Activated B cell treated with CpG ODN at 0.5 μM for 24 hours (primary cell): ENCODE measurements at regions of chr7 and their contacts with region 1.

Region 1: GRCh38 chr7:15963206-15963605 is 276.7 kb upstream of the MEOX2 start:
- DNase-seq: no peak
- ATAC-seq: no peak
- H3K4me3 Mint-ChIP-seq: no peak overlapping the region
- H3K27ac Mint-ChIP-seq: no peak overlapping the region
- H3K4me1 Mint-ChIP-seq: no peaks in the 10 kb centered on the region
- H3K27me3 Mint-ChIP-seq: no peaks in the 10 kb centered on the region
- CTCF ChIP-seq: no peak

Region 2: GRCh38 chr7:15925608-15926007 is 37.6 kb before region 1 on chr7:
- CTCF ChIA-PET with region 1: no interaction called
- POLR2A ChIA-PET with region 1: no interaction called
- intact Hi-C with region 1: loop called (anchors 5 kb)
- DNase-seq: no peak
- ATAC-seq: no peak
- H3K4me3 Mint-ChIP-seq: no peak overlapping the region
- H3K27ac Mint-ChIP-seq: no peak overlapping the region
- H3K4me1 Mint-ChIP-seq: no peaks in the 10 kb centered on the region
- H3K27me3 Mint-ChIP-seq: no peaks in the 10 kb centered on the region
- CTCF ChIP-seq: no peak